Mammary epithelial cell (primary cell): ENCODE measurements at regions of chr4 and their contacts with region 1.

Region 1: GRCh38 chr4:16794816-16795445 is 103.5 kb downstream of the LDB2 start:
- DNase-seq: no peak
- H3K4me3 ChIP-seq: no peak overlapping the region
- H3K27ac ChIP-seq: no peak overlapping the region
- H3K4me1 ChIP-seq: no peaks in the 10 kb centered on the region
- H3K27me3 ChIP-seq: no peaks in the 10 kb centered on the region
- CTCF ChIP-seq: peak; percentile 38 to 46

Region 2: GRCh38 chr4:16555156-16555555 is 239.8 kb before region 1 on chr4:
- CTCF ChIA-PET with region 1: no interaction called
- dilution Hi-C with region 1: no loop called
- in situ Hi-C with region 1: no loop called
- intact Hi-C with region 1: no loop called
- DNase-seq: no peak
- H3K4me3 ChIP-seq: no peak overlapping the region
- H3K27ac ChIP-seq: no peak overlapping the region
- H3K4me1 ChIP-seq: no peaks in the 10 kb centered on the region
- H3K27me3 ChIP-seq: no peaks in the 10 kb centered on the region
- CTCF ChIP-seq: no peak

Region 3: GRCh38 chr4:16830081-16830480 is 35.1 kb after region 1 on chr4:
- CTCF ChIA-PET with region 1: no interaction called
- dilution Hi-C with region 1: loop called (anchors 5 kb)
- in situ Hi-C with region 1: no loop called
- intact Hi-C with region 1: no loop called
- DNase-seq: no peak
- H3K4me3 ChIP-seq: no peak overlapping the region
- H3K27ac ChIP-seq: no peak overlapping the region
- H3K4me1 ChIP-seq: no peaks in the 10 kb centered on the region
- H3K27me3 ChIP-seq: no peaks in the 10 kb centered on the region
- CTCF ChIP-seq: no peak